ENCODE measurements at regions of chr11 and their contacts with region 1.

Region 1: DNA sequence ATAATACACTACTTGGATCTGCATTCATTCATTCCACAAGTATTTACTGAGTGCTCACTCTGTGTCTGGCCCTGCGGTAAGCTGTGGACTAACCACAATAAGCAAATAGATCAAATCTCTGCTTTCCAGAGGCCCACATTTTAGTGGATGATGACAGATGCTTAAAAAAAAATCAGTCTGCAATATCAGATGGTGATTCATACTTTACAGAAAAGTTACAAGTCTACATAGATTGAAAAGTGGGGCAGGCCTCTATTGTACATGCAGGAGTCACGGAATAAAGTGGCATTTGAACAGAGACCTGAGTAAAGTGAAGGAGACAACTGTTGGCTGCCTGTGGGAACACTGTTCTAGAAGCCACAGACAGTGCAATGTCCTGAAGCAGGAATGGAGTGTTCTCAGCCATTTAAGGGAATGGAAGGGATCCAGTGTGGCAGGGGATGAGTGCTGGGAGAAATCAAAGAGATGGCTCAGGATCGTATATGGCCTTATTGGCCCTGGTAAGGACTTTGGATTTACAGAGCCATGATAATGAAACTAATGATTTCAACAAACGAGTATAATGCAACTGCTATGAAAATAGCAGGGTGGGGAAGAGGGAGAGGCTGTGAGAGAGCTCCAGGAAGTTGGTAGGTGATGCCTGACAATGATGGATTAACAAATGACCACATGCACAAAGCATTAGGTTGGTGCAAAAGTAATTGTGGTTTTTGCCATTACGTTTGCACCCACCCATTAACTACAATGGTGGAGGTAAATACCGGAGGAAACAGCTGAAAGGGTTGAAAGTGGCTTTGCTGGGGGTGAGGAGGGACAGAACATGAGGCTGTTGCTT is 31.1 kb downstream of the TMEM45B start:
- DNase-seq: peak; percentile 92
- ATAC-seq: peak; percentile 99
- H3K4me3 ChIP-seq: no peak overlapping the region
- H3K27ac ChIP-seq: no peak overlapping the region
- H3K4me1 ChIP-seq: peaks cover 8% of the 10 kb centered on the region
- H3K27me3 ChIP-seq: peaks cover 30% of the 10 kb centered on the region
- CTCF ChIP-seq: no peak
- POLR2A ChIP-seq: no peak
- RAD21 ChIP-seq: no peak

Region 2: DNA sequence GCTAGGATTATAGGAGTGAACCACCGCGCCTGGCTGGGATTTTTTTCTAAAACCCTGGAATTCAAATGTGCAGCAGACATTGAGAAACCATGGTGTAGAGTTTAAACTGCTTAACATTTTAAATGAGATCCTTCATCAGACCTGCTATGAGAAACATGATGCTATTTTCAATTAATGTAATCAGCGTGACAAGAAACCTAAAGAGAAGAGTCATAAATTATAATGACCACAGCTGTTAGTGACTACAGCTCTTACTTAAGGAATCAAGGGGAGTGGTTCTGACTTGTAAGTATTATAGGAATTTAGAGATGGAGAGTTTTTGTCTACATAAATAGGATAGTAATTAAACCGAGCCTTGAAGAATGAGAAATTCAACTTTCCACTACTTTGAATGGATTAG is 300.5 kb before region 1 on chr11:
- CTCF ChIA-PET with region 1: no interaction called
- POLR2A ChIA-PET with region 1: no interaction called
- dilution Hi-C with region 1: no loop called
- in situ Hi-C with region 1: no loop called
- intact Hi-C with region 1: no loop called
- DNase-seq: no peak
- ATAC-seq: no peak
- H3K4me3 ChIP-seq: no peak overlapping the region
- H3K27ac ChIP-seq: no peak overlapping the region
- H3K4me1 ChIP-seq: no peaks in the 10 kb centered on the region
- H3K27me3 ChIP-seq: no peaks in the 10 kb centered on the region
- CTCF ChIP-seq: no peak
- POLR2A ChIP-seq: no peak
- RAD21 ChIP-seq: no peak

Region 3: DNA sequence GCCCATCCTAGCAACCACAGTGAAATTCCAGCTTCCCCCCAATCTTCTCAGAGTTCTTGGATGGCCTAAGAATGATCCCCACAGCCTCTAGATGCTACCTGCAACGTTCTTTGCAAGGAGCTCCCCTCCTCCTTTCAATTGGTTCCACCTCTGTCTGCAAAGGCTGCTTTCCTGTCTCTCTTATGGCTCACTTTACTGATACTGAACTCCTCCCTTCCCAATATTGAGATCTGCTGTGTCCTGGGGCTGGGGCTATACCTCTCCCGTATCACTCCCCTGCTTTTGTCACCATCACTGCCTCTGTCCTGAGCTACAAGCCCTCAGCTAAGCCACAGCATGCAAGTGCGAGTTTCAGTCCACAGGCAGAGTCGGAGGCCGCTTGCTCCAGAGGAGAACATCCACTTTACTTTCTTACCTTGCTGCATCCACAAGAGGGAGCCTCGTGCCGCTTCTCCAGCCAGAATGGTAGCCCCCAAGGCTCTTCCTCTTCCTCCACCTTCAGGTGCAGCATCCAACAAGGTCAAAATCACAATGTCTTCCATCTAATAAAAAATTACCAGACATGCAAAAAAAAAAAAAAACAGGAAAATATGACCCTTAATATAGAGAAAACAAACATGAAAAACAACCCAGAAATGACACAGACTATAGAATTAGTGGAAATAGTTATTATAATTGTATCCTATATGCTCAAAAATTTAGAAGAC is 79.7 kb before region 1 on chr11:
- CTCF ChIA-PET with region 1: no interaction called
- POLR2A ChIA-PET with region 1: no interaction called
- dilution Hi-C with region 1: no loop called
- in situ Hi-C with region 1: no loop called
- intact Hi-C with region 1: loop called (anchors 2 kb)
- DNase-seq: peak; percentile 23
- ATAC-seq: peak; percentile 93
- H3K4me3 ChIP-seq: no peak overlapping the region
- H3K27ac ChIP-seq: no peak overlapping the region
- H3K4me1 ChIP-seq: no peaks in the 10 kb centered on the region
- H3K27me3 ChIP-seq: no peaks in the 10 kb centered on the region
- CTCF ChIP-seq: peak; percentile 49
- POLR2A ChIP-seq: no peak
- RAD21 ChIP-seq: peak; percentile 41

Region 4: DNA sequence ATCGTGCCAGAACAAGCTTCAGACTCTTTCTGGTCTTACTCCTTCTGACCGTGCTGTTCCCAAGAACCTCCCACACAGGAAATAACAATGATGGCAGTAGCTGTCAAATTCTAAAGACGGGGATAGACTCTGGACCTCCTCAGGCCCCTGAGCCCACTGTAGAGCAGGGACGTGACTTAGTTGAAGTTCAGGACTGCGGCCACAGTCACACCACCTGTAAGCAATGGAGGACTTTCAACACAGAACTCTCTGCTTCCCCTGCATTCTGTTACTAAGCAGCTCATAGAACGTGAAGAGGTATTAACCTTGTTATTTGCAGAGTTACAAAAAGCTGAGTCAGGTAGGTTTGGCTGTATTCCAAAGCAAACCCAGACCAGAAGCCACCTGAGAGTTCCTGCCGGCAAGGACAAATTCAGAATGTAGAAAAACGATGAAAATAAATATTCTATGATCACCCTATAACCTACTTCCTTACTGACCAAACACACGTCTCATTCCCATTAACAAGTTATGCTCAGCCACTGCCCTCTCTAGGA is 18.3 kb before region 1 on chr11:
- CTCF ChIA-PET with region 1: no interaction called
- POLR2A ChIA-PET with region 1: no interaction called
- dilution Hi-C with region 1: no loop called
- in situ Hi-C with region 1: no loop called
- intact Hi-C with region 1: no loop called
- DNase-seq: no peak
- ATAC-seq: no peak
- H3K4me3 ChIP-seq: no peak overlapping the region
- H3K27ac ChIP-seq: no peak overlapping the region
- H3K4me1 ChIP-seq: no peaks in the 10 kb centered on the region
- H3K27me3 ChIP-seq: 0 out of 2 replicates have a peak, but pooled peaks cover 2% of the 10 kb centered on the region
- CTCF ChIP-seq: no peak
- POLR2A ChIP-seq: no peak
- RAD21 ChIP-seq: no peak

Region 5: DNA sequence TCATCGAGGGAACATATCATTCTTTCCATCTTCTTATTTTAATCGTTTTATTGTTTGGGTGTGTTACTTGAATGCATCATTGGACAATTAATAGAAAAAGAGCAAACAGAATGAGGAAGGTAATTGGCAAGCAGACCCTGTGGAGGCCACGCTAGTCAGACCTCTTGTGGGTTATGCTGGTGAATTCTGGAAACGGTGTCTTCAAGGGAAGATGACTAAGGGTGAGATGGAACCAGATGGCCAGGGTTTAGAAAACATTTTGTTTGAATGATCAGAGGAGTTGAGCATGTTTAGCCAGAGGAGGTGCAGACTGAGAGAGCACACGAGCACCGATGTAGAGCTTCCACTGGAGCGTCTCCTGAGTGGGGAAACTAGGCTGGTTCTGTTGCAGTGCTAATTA is 321.4 kb after region 1 on chr11:
- CTCF ChIA-PET with region 1: no interaction called
- POLR2A ChIA-PET with region 1: no interaction called
- dilution Hi-C with region 1: no loop called
- in situ Hi-C with region 1: no loop called
- intact Hi-C with region 1: no loop called
- DNase-seq: peak; percentile 88
- ATAC-seq: no peak
- H3K4me3 ChIP-seq: no peak overlapping the region
- H3K27ac ChIP-seq: no peak overlapping the region
- H3K4me1 ChIP-seq: peaks cover 4% of the 10 kb centered on the region
- H3K27me3 ChIP-seq: peaks cover 5% of the 10 kb centered on the region; the same call in 1 of the 2 replicates
- CTCF ChIP-seq: no peak
- POLR2A ChIP-seq: no peak
- RAD21 ChIP-seq: no peak